Naive thymus-derived CD4-positive, alpha-beta T cell (primary cell): ENCODE measurements at regions of chr9 and their contacts with region 1.

Region 1: GRCh38 chr9:35603987-35604577 is 980 bp upstream of the TESK1 start:
- DNase-seq: peak; percentile 94 to 99 (median 99)
- ATAC-seq: peak; percentile 95
- H3K4me3 ChIP-seq: peak overlapping the region; percentile 65
- H3K4me3 Mint-ChIP-seq: peak overlapping the region; percentile 92 to 100 (median 98)
- H3K27ac ChIP-seq: peak overlapping the region; percentile 84
- H3K27ac Mint-ChIP-seq: peak overlapping the region; percentile 94 to 99 (median 98)
- H3K4me1 ChIP-seq: peaks cover 22 to 24% of the 10 kb centered on the region in 2 donors
- H3K4me1 Mint-ChIP-seq: peaks cover 21 to 42% (median 35%) of the 10 kb centered on the region in 7 donors
- H3K27me3 ChIP-seq: no peaks in the 10 kb centered on the region
- H3K27me3 Mint-ChIP-seq: no peaks in the 10 kb centered on the region

Region 2: GRCh38 chr9:34458013-34458958 is 1145.8 kb before region 1 on chr9 and contains the starts of genes DNAI1 and FAM219A:
- CTCF ChIA-PET with region 1: no interaction called
- POLR2A ChIA-PET with region 1: no interaction called
- intact Hi-C with region 1: loop called in 1 of 2 experiments (anchors 10 kb)
- DNase-seq: peak; percentile 97 to 100 (median 99)
- ATAC-seq: peak; percentile 98
- H3K4me3 ChIP-seq: peak within 1 kb of the TSS; percentile 68
- H3K4me3 Mint-ChIP-seq: peak within 1 kb of the TSS; percentile 86 to 93 (median 92)
- H3K27ac ChIP-seq: peak within 1 kb of the TSS; percentile 41
- H3K27ac Mint-ChIP-seq: peak within 1 kb of the TSS; percentile 57 to 93 (median 82)
- H3K4me1 ChIP-seq: peaks cover 13 to 16% of the 10 kb centered on the region in 2 donors
- H3K4me1 Mint-ChIP-seq: peaks cover 28 to 46% (median 38%) of the 10 kb centered on the region in 7 donors
- H3K27me3 ChIP-seq: no peaks in the 10 kb centered on the region
- H3K27me3 Mint-ChIP-seq: peaks cover 0 to 23% (median 6%) of the 10 kb centered on the region in 5 donors
- total RNA-seq, gene DNAI1: not detected
- total RNA-seq, gene FAM219A: 12.3 to 14.6 (median 13.4) TPM

Region 3: GRCh38 chr9:35071814-35072460 is 532.1 kb before region 1 on chr9:
- CTCF ChIA-PET with region 1: no interaction called
- POLR2A ChIA-PET with region 1: no interaction called
- intact Hi-C with region 1: loop called in 1 of 2 experiments (anchors 2 kb)
- DNase-seq: peak in 8 of 9 donors; percentile 67 to 83 (median 71)
- ATAC-seq: peak; percentile 70
- H3K4me3 ChIP-seq: peak overlapping the region; percentile 53
- H3K4me3 Mint-ChIP-seq: peak overlapping the region; percentile 74 to 95 (median 88)
- H3K27ac ChIP-seq: peak overlapping the region; percentile 93
- H3K27ac Mint-ChIP-seq: peak overlapping the region; percentile 81 to 96 (median 91)
- H3K4me1 ChIP-seq: peaks cover 22 to 43% of the 10 kb centered on the region in 2 donors
- H3K4me1 Mint-ChIP-seq: peaks cover 34 to 66% (median 53%) of the 10 kb centered on the region in 7 donors
- H3K27me3 ChIP-seq: no peaks in the 10 kb centered on the region
- H3K27me3 Mint-ChIP-seq: peaks cover 0 to 3% (median 0%) of the 10 kb centered on the region in 5 donors

Region 4: DNA sequence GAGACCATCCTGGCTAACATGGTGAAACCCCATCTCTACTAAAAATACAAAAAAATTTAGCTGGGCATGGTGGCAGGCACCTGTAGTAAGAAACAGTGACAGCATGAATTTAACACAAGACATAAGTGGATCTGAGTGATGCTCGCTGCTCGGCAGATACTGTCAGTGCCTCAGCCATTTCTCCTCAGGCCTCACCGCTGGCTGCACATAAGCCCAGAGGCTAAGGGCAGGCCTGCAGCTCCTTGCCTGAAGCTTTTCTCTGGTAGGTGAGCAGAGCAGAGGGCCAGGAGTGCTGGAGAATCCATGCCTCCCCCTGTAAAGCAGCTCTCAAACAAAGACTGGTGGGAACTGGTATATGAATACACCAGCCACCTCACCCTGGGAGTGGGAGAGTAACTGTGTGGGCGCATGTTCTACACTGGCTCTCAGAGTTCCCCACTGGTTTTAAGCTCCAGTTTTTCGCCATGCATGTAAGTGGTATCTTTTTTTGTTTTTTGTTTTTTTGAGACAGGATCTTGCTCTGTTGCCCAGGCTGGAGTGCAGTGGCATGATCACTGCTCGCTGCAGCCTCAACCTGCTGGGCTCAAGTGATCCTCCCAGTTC is 24.4 kb after region 1 on chr9:
- CTCF ChIA-PET with region 1: no interaction called
- POLR2A ChIA-PET with region 1: no interaction called
- intact Hi-C with region 1: no loop called
- DNase-seq: no peak
- ATAC-seq: no peak
- H3K4me3 ChIP-seq: no peak overlapping the region
- H3K4me3 Mint-ChIP-seq: no peak overlapping the region
- H3K27ac ChIP-seq: no peak overlapping the region
- H3K27ac Mint-ChIP-seq: no peak overlapping the region
- H3K4me1 ChIP-seq: no peaks in the 10 kb centered on the region
- H3K4me1 Mint-ChIP-seq: peaks cover 2 to 12% (median 6%) of the 10 kb centered on the region in 7 donors
- H3K27me3 ChIP-seq: no peaks in the 10 kb centered on the region
- H3K27me3 Mint-ChIP-seq: no peaks in the 10 kb centered on the region

Region 5: DNA sequence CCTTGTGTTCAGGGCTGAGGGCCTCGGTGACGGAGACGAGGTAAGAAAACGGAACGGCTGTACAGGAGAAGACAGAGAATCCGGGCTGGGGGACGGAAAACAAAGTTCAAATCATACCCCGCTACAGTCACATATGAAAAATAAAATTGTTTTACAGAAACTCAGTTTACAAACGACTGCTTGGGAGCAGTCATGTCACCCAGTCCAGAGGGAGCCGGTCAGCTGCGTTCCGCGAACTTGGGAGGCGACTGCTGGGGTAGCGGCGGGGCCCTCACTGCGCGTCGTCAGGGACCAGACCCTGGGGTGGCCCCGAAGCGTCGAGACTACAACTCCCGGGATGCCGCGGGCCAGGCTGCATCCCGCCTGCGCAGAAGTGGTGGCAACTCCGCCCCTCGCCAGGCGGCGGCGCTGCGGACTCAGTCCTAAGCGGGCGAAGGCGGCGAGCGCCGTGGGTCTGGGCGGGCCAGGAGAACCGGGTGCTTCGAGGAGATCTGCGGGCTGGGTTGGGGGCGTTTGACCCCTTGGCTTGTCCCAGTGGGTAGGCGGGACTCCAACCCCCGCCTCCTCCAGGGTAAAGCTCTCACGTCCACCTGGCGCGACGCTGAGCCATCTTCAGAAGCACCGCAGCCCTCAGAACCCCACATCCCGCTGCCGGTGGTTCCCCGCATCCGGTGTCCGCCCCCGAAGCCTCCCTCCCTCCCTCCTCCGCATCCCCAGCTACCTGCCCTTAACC is 42.6 kb after region 1 on chr9:
- CTCF ChIA-PET with region 1: interaction called, 118 read pairs
- POLR2A ChIA-PET with region 1: interaction called, 36 read pairs
- intact Hi-C with region 1: loop called (anchors 1 kb)
- DNase-seq: peak; percentile 87 to 96 (median 93)
- ATAC-seq: peak; percentile 95
- H3K4me3 ChIP-seq: peak overlapping the region; percentile 90
- H3K4me3 Mint-ChIP-seq: peak overlapping the region; percentile 90 to 100 (median 96)
- H3K27ac ChIP-seq: peak overlapping the region; percentile 83
- H3K27ac Mint-ChIP-seq: peak overlapping the region; percentile 86 to 99 (median 96)
- H3K4me1 ChIP-seq: peaks cover 44 to 51% of the 10 kb centered on the region in 2 donors
- H3K4me1 Mint-ChIP-seq: peaks cover 40 to 70% (median 46%) of the 10 kb centered on the region in 7 donors
- H3K27me3 ChIP-seq: no peaks in the 10 kb centered on the region
- H3K27me3 Mint-ChIP-seq: no peaks in the 10 kb centered on the region

Region 6: DNA sequence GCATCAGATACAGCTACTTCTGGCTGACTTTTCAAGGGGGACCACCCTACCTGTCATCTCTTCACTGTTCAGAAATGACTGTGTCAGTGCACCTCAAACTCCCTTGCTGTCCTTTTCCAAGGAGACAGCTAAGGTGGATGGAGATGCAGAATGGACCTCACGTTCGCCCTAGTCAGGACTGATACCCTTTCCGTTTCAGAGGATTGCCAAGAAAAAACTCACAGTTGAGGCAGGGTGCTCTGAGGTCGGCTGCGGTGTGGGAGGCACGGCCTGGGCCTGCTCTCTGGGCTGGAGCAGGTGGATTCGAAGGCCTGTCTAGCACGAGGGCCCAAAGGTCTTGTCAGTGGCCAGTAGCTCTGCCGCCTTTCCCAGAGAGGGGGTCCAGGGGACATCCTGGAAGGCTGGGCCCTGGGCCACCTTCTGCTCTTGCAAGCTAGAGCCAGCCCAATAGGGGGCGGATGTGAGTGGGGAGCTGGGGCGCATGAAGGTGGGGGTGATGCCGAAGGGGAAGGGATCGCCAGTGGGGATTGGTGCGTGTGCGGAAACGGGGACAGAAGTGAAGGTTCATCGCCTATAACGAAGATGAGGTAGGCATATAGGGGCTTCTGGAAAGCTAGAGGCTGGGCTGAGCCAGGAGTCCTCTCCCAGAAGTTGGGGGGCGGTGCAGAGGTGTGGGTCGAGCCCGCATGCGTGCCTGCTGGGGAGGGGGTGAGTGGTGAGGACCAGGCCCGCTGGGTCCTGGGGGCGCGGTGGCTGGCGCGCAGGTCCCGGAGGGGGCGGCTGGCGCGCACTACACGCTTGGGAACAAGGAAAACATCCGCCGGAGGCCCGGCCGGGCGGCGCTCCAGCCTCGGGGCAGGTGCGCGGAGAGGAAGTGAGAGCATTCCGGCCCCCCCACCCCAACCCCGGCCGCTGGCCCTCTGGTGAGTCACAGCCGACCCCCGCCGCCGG is 152.5 kb after region 1 on chr9:
- CTCF ChIA-PET with region 1: interaction called, 4 read pairs
- POLR2A ChIA-PET with region 1: interaction called, 4 read pairs
- intact Hi-C with region 1: loop called in 1 of 2 experiments (anchors 1 kb)
- DNase-seq: peak; percentile 58 to 80 (median 75)
- ATAC-seq: peak; percentile 95
- H3K4me3 ChIP-seq: peak overlapping the region; percentile 92
- H3K4me3 Mint-ChIP-seq: peak overlapping the region; percentile 89 to 100 (median 96)
- H3K27ac ChIP-seq: peak overlapping the region; percentile 82
- H3K27ac Mint-ChIP-seq: peak overlapping the region; percentile 88 to 99 (median 94)
- H3K4me1 ChIP-seq: peaks cover 6 to 9% of the 10 kb centered on the region in 2 donors
- H3K4me1 Mint-ChIP-seq: peaks cover 34 to 61% (median 52%) of the 10 kb centered on the region in 7 donors
- H3K27me3 ChIP-seq: no peaks in the 10 kb centered on the region
- H3K27me3 Mint-ChIP-seq: no peaks in the 10 kb centered on the region

Region 7: GRCh38 chr9:36258208-36258988 is 654.3 kb after region 1 on chr9 and contains the start of gene GNE:
- CTCF ChIA-PET with region 1: no interaction called
- POLR2A ChIA-PET with region 1: no interaction called
- intact Hi-C with region 1: loop called in 1 of 2 experiments (anchors 2 kb)
- DNase-seq: peak; percentile 92 to 99 (median 96)
- ATAC-seq: peak; percentile 96
- H3K4me3 ChIP-seq: peak within 1 kb of the TSS; percentile 98
- H3K4me3 Mint-ChIP-seq: peak within 1 kb of the TSS; percentile 96 to 100 (median 98)
- H3K27ac ChIP-seq: peak within 1 kb of the TSS; percentile 93
- H3K27ac Mint-ChIP-seq: peak within 1 kb of the TSS; percentile 92 to 98 (median 96)
- H3K4me1 ChIP-seq: peaks cover 7 to 9% of the 10 kb centered on the region in 2 donors
- H3K4me1 Mint-ChIP-seq: peaks cover 0 to 14% (median 12%) of the 10 kb centered on the region in 7 donors
- H3K27me3 ChIP-seq: no peaks in the 10 kb centered on the region
- H3K27me3 Mint-ChIP-seq: peaks cover 0 to 2% (median 0%) of the 10 kb centered on the region in 5 donors
- total RNA-seq, gene GNE: 12.6 to 18.5 (median 16.0) TPM